WTC11 (cell line): ENCODE measurements at regions of chrX and their contacts with region 1.

Region 1: GRCh38 chrX:128975745-128976144 is 547.5 kb downstream of the SMARCA1 start:
- DNase-seq: peak; percentile 75
- ATAC-seq: peak; percentile 97
- H3K4me3 Mint-ChIP-seq: no peak overlapping the region
- H3K27ac Mint-ChIP-seq: no peak overlapping the region
- H3K4me1 Mint-ChIP-seq: peaks cover 23% of the 10 kb centered on the region
- H3K27me3 Mint-ChIP-seq: no peaks in the 10 kb centered on the region
- CTCF ChIP-seq: peak; percentile 59

Region 2: GRCh38 chrX:128816919-128817318 is 158.8 kb before region 1 on chrX:
- CTCF ChIA-PET with region 1: interaction called, 12 read pairs
- POLR2A ChIA-PET with region 1: no interaction called
- DNase-seq: peak; percentile 9
- ATAC-seq: peak; percentile 74
- H3K4me3 Mint-ChIP-seq: no peak overlapping the region
- H3K27ac Mint-ChIP-seq: no peak overlapping the region
- H3K4me1 Mint-ChIP-seq: no peaks in the 10 kb centered on the region; the same call in 1 of the 2 replicates
- H3K27me3 Mint-ChIP-seq: no peaks in the 10 kb centered on the region
- CTCF ChIP-seq: peak; percentile 33; the same call in 1 of the 2 replicates

Region 3: DNA sequence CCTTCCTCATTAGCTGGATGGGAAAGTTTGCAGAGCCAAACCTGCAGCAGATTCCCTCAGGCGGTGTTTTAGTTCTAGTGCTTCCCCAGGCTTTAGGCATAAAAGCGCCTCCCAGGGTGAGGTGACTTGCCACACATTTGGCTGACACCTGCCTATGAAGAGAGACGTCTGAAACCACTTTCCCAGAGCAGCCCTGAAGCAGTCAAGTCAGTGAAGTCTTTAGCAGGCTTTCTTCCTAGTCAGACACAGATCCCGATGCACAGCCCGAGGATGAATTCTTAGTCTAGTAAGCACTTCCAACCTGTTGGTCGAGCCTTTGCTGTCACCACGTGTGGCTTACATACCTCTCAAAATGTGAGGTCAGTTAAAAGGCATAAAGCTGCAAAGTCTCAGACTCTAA is 63.4 kb after region 1 on chrX:
- CTCF ChIA-PET with region 1: no interaction called
- POLR2A ChIA-PET with region 1: no interaction called
- DNase-seq: no peak
- ATAC-seq: peak; percentile 43
- H3K4me3 Mint-ChIP-seq: no peak overlapping the region
- H3K27ac Mint-ChIP-seq: 0 out of 2 replicates have a peak overlapping the region, but pooled peaks have one; percentile 41
- H3K4me1 Mint-ChIP-seq: peaks cover 24% of the 10 kb centered on the region
- H3K27me3 Mint-ChIP-seq: no peaks in the 10 kb centered on the region
- CTCF ChIP-seq: no peak

Region 4: DNA sequence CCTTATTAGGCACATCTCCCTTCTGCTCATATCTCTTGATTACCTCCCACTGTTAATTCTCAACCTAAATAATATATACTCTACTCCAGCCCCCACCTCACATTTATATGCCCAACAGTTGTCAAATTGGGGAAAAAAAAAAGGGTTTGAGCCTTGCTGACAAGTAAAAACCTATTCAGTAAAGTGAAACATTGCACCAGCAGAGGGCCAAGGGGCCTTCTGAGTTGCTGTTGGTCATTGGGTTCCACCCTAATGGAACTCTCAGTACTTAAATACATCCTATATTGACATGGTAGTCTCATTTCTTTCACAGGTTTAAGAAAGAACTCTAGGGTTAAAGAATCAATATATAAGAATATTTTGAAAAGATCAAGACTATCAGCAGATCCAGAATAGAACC is 185.4 kb after region 1 on chrX:
- CTCF ChIA-PET with region 1: no interaction called
- POLR2A ChIA-PET with region 1: no interaction called
- DNase-seq: peak; percentile 12
- ATAC-seq: peak; percentile 50; the same call in 1 of the 2 replicates
- H3K4me3 Mint-ChIP-seq: no peak overlapping the region
- H3K27ac Mint-ChIP-seq: no peak overlapping the region
- H3K4me1 Mint-ChIP-seq: no peaks in the 10 kb centered on the region
- H3K27me3 Mint-ChIP-seq: no peaks in the 10 kb centered on the region
- CTCF ChIP-seq: no peak